ENCODE measurements at regions of chr1 and their contacts with region 1.

Region 1: GRCh38 chr1:16257968-16258367 is 21.0 kb upstream of the CPLANE2 start:
- DNase-seq: no peak

Region 2: DNA sequence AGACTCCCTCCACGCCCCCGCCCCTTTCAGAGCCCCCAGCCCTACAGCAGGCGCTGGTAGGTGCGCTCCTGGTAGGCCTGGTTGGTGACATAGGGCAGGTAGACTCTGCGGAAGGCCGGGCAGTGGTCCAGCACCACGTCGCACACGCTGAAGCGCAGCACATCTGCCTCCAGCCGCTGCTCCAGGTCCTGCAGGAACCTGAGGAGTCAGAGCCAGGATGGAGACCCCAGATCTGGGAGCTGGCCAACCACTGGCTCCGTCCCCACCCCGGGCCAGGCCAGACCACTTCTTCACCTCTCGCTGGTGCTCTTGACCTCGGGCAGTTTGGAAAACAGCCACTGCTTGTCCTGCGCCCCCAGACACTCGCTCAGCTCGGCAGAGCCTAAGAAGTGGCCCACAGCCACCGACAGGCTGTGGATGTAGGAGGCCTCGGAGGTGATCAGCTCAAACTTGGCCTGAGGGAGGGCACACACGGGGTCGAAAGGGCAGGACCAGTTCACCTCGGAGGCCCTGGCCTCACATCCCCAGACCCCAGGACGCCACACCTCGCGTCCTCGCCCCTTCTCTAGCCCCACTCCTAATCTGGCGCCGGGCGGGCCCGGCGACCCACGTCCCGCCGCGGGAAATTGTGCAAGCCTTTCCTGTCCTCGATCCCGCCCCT is 52.0 kb before region 1 on chr1:
- CTCF ChIA-PET with region 1: interaction called, 11 read pairs
- POLR2A ChIA-PET with region 1: no interaction called
- DNase-seq: no peak

Region 3: GRCh38 chr1:16300436-16300835 is 42.5 kb after region 1 on chr1:
- CTCF ChIA-PET with region 1: no interaction called
- POLR2A ChIA-PET with region 1: no interaction called
- DNase-seq: no peak

Measured in HEK293T (cell line).